ENCODE measurements at regions of chr14 and their contacts with region 1.

Region 1: GRCh38 chr14:96086041-96086440 is 46.9 kb downstream of the C14orf132 start:
- DNase-seq: no peak

Region 2: DNA sequence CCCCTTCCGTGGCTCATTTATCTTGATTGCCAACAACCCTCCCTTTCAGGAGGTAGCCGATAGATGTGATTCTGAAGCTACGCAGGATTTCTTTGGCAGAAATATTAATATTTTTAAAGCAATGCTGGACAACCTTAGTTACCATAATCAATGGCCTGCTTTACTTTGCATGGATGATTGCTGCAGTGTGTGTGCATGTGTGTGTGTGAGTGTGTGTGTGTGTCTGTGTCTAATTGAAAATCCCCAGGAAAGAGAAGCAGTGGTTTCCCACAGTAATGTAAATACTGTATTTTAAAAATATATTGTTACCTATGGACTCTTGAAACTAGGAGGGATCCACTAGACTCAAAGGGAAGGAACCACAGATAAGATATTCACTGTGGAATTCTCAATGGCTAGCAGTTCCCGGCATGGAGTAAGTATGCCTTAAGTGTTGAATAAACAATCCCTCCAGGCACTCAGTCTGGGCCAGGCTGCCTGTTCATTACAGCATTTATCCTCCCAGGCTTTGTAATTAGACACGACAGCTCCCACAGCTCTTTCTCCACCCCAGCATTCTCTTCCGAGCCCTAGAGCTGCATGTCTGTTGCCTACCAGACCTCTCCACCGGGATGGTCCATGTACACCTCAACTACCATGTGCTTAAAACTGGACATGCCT is 69.4 kb before region 1 on chr14:
- intact Hi-C with region 1: loop called (anchors 5 kb)
- DNase-seq: no peak